Activated T-helper 2 cell treated with anti-CD3 and anti-CD28 coated beads, Interferon-gamma antibody, Interleukin-2, Interleukin-4, amounts not matched to agents 10 μg/mL and 5 μg/mL and 100 μg/mL, durations not matched to agents 14 hours and 24 hours and 36 hours (primary cell): ENCODE measurements at regions of chr1 and their contacts with region 1.

Region 1: GRCh38 chr1:145957443-145958319 is at the start of gene LIX1L:
- DNase-seq: peak; percentile 93
- H3K4me3 Mint-ChIP-seq: peak within 1 kb of the TSS; percentile 98
- H3K27ac Mint-ChIP-seq: peak within 1 kb of the TSS; percentile 91
- H3K4me1 Mint-ChIP-seq: peaks cover 56% of the 10 kb centered on the region
- H3K27me3 Mint-ChIP-seq: no peaks in the 10 kb centered on the region
- total RNA-seq, gene LIX1L: 38.1 and 39.4 TPM in 2 replicates

Region 2: GRCh38 chr1:145927063-145927886 is 30.4 kb before region 1 on chr1 and contains the start of gene RBM8A:
- intact Hi-C with region 1: loop called (anchors 1 kb)
- DNase-seq: peak; percentile 94
- H3K4me3 Mint-ChIP-seq: no peak within 1 kb of the TSS
- H3K27ac Mint-ChIP-seq: peak within 1 kb of the TSS; percentile 80
- H3K4me1 Mint-ChIP-seq: peaks cover 15% of the 10 kb centered on the region
- H3K27me3 Mint-ChIP-seq: no peaks in the 10 kb centered on the region
- total RNA-seq, gene RBM8A: 270 and 287 TPM in 2 replicates

Region 3: GRCh38 chr1:146036965-146037646 is 79.4 kb after region 1 on chr1:
- intact Hi-C with region 1: loop called (anchors 2 kb)
- DNase-seq: peak; percentile 71
- H3K4me3 Mint-ChIP-seq: peak overlapping the region; percentile 97
- H3K27ac Mint-ChIP-seq: peak overlapping the region; percentile 90
- H3K4me1 Mint-ChIP-seq: peaks cover 41% of the 10 kb centered on the region
- H3K27me3 Mint-ChIP-seq: peaks cover 7% of the 10 kb centered on the region